ENCODE measurements at regions of chr19 and their contacts with region 1.

Region 1: DNA sequence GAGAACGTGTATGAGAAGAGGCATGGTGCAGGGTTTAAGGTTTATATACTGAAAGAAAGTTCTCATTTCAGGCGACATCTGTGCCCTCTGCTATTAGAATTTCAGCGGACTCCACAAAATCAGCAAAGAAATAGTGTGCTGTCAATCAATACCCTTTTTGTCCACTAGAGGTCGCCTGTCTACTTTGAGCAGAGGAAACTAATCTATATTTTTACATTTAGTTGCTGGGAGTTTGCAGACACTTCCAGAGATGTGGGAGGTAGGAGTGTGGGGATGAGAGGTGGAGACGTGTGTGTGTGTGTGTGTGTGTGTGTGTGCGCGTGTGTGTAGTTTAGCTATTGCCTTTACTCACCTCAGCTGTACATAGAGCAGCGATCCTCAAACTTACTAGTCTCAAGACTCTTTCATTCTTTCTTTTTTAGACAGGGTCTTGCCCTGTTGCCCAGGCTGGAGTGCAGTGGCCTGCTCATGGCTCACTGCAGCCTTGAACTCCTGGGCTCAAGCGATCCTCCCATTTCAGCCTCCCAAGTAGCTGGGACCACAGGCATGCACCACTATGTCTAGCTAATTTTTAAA is 9.7 kb downstream of the INAFM1 start:
- DNase-seq: no peak
- ATAC-seq: no peak
- H3K4me3 Mint-ChIP-seq: no peak overlapping the region
- H3K27ac Mint-ChIP-seq: no peak overlapping the region
- H3K4me1 Mint-ChIP-seq: peaks cover 20% of the 10 kb centered on the region
- H3K27me3 Mint-ChIP-seq: no peaks in the 10 kb centered on the region
- CTCF ChIP-seq: no peak

Region 2: GRCh38 chr19:47186446-47187334 is 97.7 kb before region 1 on chr19:
- CTCF ChIA-PET with region 1: no interaction called
- POLR2A ChIA-PET with region 1: no interaction called
- intact Hi-C with region 1: no loop called
- DNase-seq: peak; percentile 25
- ATAC-seq: peak; percentile 75
- H3K4me3 Mint-ChIP-seq: peak overlapping the region; percentile 49
- H3K27ac Mint-ChIP-seq: peak overlapping the region; percentile 85
- H3K4me1 Mint-ChIP-seq: peaks cover 20% of the 10 kb centered on the region
- H3K27me3 Mint-ChIP-seq: no peaks in the 10 kb centered on the region
- CTCF ChIP-seq: no peak

Region 3: GRCh38 chr19:47296036-47296435 is 11.6 kb after region 1 on chr19:
- CTCF ChIA-PET with region 1: interaction called, 13 read pairs
- POLR2A ChIA-PET with region 1: interaction called, 3 read pairs
- intact Hi-C with region 1: no loop called
- DNase-seq: no peak
- ATAC-seq: peak; percentile 75
- H3K4me3 Mint-ChIP-seq: no peak overlapping the region
- H3K27ac Mint-ChIP-seq: no peak overlapping the region
- H3K4me1 Mint-ChIP-seq: peaks cover 20% of the 10 kb centered on the region
- H3K27me3 Mint-ChIP-seq: no peaks in the 10 kb centered on the region
- CTCF ChIP-seq: no peak

Region 4: GRCh38 chr19:47348819-47349795 is 64.7 kb after region 1 on chr19 and contains the start of gene DHX34:
- CTCF ChIA-PET with region 1: interaction called, 6 read pairs
- POLR2A ChIA-PET with region 1: interaction called, 4 read pairs
- intact Hi-C with region 1: loop called (anchors 2 kb)
- DNase-seq: peak; percentile 99
- ATAC-seq: peak; percentile 98
- H3K4me3 Mint-ChIP-seq: peak within 1 kb of the TSS; percentile 98
- H3K27ac Mint-ChIP-seq: peak within 1 kb of the TSS; percentile 90
- H3K4me1 Mint-ChIP-seq: peaks cover 40% of the 10 kb centered on the region
- H3K27me3 Mint-ChIP-seq: no peaks in the 10 kb centered on the region
- CTCF ChIP-seq: peak; percentile 65
- total RNA-seq, gene DHX34: 17.4 and 20.0 TPM in 2 replicates

Region 5: DNA sequence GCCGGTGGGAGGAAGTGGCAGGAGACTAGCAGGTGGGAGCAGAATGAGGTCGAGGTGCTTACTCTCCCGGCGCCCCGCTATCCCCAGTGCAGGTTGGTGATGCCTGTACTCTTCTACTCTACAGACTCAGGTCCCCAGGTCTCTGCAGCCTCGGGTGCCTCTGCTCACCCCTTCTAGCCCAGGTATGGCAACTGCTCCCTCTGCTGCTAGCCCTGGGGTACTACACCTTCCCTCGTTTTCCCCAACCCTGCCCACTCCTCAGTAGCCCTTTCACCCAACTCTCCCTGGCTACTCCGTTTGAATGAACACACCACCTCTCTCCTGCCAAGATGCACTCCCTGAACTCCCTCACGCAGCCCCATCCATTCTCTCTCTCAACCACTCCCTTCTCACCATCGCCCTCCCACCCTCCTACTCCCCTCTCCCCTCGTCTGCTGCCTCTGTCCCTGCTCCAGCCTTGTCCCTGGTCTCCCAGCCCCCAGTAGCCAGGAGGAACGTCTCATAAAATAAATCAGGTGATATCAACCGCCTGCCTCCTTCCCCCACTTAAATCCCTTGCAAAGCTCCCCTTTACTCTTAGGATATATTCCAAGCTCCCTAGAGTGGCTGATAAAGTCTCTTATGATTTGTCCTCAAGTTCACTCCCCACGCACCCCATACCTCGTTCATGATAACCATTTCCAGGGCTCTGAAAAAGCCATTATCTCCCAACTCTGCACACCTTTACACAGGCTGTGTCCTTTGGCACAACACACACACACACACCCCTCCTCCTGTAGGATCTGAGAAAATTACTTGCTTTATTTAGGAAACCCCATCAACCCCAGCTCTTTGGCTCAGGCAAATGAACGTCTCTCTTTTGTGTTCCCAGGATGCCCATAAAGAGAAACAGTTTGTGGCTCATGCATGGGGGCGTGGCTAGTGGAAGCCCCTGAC is 143.1 kb after region 1 on chr19:
- CTCF ChIA-PET with region 1: interaction called, 4 read pairs
- POLR2A ChIA-PET with region 1: no interaction called
- intact Hi-C with region 1: loop called (anchors 1 kb)
- DNase-seq: peak; percentile 54
- ATAC-seq: peak; percentile 84
- H3K4me3 Mint-ChIP-seq: no peak overlapping the region
- H3K27ac Mint-ChIP-seq: no peak overlapping the region
- H3K4me1 Mint-ChIP-seq: peaks cover 5% of the 10 kb centered on the region
- H3K27me3 Mint-ChIP-seq: peaks cover 50% of the 10 kb centered on the region
- CTCF ChIP-seq: no peak

Region 6: DNA sequence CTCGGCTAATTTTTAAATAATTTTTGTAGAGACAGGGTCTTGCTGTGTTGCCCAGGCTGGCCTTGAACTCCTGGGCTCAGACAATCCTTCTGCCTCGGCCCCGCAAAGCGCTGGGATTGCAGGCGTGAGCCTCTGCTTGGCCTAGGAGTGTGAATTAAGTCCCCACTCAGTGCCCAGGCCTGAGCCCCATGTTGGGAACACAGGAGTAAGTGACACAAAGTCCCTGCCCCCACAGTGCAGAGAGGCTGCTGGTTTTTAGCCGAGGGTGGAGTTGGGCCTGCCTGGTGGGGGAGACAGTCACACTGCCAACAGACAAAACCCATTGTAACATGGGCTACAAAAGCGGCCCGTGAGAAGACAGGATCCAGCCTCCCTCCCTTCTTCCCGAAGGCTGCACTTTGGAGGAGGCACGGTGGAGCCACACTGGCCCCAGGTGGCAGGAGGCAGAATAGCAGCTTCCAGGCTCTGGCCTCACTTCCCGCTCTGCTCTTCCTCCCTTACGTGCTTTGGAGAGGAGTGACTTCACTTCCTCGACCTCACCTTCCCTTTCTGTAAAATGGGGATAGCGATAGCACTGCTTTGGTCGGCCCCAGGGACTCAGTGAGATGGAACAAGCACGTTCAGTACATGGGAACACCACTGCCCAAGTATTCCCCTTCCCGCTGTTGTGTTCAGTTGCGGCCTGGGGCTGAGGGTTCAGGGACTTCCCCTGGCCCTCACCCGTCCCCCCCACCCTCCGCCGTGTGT is 413.6 kb after region 1 on chr19:
- CTCF ChIA-PET with region 1: no interaction called
- POLR2A ChIA-PET with region 1: no interaction called
- intact Hi-C with region 1: loop called (anchors 5 kb)
- DNase-seq: peak; percentile 37
- ATAC-seq: peak; percentile 71
- H3K4me3 Mint-ChIP-seq: no peak overlapping the region
- H3K27ac Mint-ChIP-seq: no peak overlapping the region
- H3K4me1 Mint-ChIP-seq: no peaks in the 10 kb centered on the region
- H3K27me3 Mint-ChIP-seq: no peaks in the 10 kb centered on the region
- CTCF ChIP-seq: no peak

Measured in activated B cell treated with CpG ODN at 0.5 μM for 24 hours (primary cell).